GM12878 (cell line): ENCODE measurements at regions of chr3 and their contacts with region 1.

Region 1: GRCh38 chr3:23421811-23422516 is 218.8 kb downstream of the UBE2E2 start:
- DNase-seq: no peak
- ATAC-seq: peak; percentile 55
- H3K4me3 ChIP-seq: no peak overlapping the region
- H3K27ac ChIP-seq: no peak overlapping the region
- H3K4me1 ChIP-seq: peaks cover 16% of the 10 kb centered on the region
- H3K27me3 ChIP-seq: no peaks in the 10 kb centered on the region
- CTCF ChIP-seq: no peak
- EP300 ChIP-seq: no peak
- POLR2A ChIP-seq: no peak
- RAD21 ChIP-seq: no peak

Region 2: GRCh38 chr3:23219117-23219516 is 202.8 kb before region 1 on chr3:
- CTCF ChIA-PET with region 1: no interaction called
- POLR2A ChIA-PET with region 1: interaction called, 10 read pairs
- RAD21 ChIA-PET with region 1: no interaction called
- SMC1A ChIA-PET with region 1: no interaction called
- in situ Hi-C with region 1: no loop called
- intact Hi-C with region 1: no loop called
- DNase-seq: no peak
- ATAC-seq: peak; percentile 70
- H3K4me3 ChIP-seq: no peak overlapping the region
- H3K27ac ChIP-seq: peak overlapping the region; percentile 41; the same call in 1 of the 2 replicates
- H3K4me1 ChIP-seq: peaks cover 36% of the 10 kb centered on the region
- H3K27me3 ChIP-seq: no peaks in the 10 kb centered on the region
- CTCF ChIP-seq: no peak
- EP300 ChIP-seq: no peak
- POLR2A ChIP-seq: no peak
- RAD21 ChIP-seq: no peak

Region 3: GRCh38 chr3:23435318-23435717 is 13.4 kb after region 1 on chr3:
- CTCF ChIA-PET with region 1: interaction called, 14 read pairs
- POLR2A ChIA-PET with region 1: interaction called, 3 read pairs
- RAD21 ChIA-PET with region 1: interaction called, 8 read pairs
- SMC1A ChIA-PET with region 1: interaction called, 23 read pairs
- in situ Hi-C with region 1: no loop called
- intact Hi-C with region 1: no loop called
- DNase-seq: no peak
- ATAC-seq: no peak; the same call in 1 of the 3 replicates
- H3K4me3 ChIP-seq: no peak overlapping the region
- H3K27ac ChIP-seq: no peak overlapping the region
- H3K4me1 ChIP-seq: peaks cover 12% of the 10 kb centered on the region
- H3K27me3 ChIP-seq: no peaks in the 10 kb centered on the region
- CTCF ChIP-seq: no peak
- EP300 ChIP-seq: no peak
- POLR2A ChIP-seq: no peak
- RAD21 ChIP-seq: no peak